ENCODE measurements at regions of chr9 and their contacts with region 1.

Region 1: DNA sequence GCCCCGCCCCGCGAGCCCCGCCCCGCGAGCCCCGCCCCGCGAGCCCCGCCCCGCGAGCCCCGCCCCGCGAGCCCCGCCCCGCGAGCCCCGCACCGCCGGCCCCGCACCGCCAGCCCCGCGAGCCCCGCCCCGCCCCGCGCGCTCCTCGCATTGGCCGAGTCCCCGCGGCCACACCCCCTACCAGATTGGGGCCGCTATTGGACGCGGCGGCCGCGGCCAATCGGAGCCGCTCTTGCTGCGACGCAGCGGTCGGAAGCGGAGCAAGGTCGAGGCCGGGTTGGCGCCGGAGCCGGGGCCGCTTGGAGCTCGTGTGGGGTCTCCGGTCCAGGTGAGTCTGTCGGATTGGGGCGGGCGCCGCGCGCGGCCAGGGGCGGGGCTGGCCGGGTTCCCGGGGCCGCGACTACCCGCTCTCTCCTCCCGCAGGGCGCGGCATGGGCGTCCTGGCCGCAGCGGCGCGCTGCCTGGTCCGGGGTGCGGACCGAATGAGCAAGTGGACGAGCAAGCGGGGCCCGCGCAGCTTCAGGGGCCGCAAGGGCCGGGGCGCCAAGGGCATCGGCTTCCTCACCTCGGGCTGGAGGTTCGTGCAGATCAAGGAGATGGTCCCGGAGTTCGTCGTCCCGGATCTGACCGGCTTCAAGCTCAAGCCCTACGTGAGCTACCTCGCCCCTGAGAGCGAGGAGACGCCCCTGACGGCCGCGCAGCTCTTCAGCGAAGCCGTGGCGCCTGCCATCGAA is at the start of gene MRPL41:
- DNase-seq: peak; percentile 70 to 93
- H3K4me3 ChIP-seq: peak within 1 kb of the TSS; percentile 63 to 79 (median 78)
- H3K27ac ChIP-seq: peak within 1 kb of the TSS; percentile 53; the same call in 1 of the 2 replicates
- H3K4me1 ChIP-seq: peaks cover 0 to 7% (median 1%) of the 10 kb centered on the region in 4 experiments; a peak in 3 of 7 replicates
- H3K27me3 ChIP-seq: no peaks in the 10 kb centered on the region
- CTCF ChIP-seq: no peak
- EP300 ChIP-seq: no peak
- POLR2A ChIP-seq: peak in 1 of 2 experiments; percentile 67; a peak in 2 of 3 replicates
- RAD21 ChIP-seq: no peak
- total RNA-seq, gene MRPL41: 47.2 and 49.4 TPM in 2 replicates

Region 2: DNA sequence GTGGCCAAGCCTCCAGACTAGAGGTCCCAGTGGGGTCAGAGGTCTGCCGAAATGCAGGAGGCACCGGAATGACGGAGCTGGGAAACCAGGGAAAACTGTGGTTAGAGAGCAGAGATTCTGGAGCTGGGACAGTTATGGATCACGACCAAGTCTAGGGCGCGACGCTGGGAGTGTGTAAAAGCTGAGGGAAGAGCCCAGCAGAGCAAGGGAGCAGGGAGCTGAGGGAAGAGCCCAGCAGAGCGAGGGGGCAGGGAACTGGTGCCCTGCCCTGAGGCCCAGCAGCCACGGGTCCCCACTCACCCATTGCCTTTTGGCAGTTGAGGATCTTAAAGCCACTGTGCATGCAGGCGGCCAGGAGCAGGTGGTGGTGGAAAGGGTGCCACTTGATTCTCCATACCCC is 12.3 kb after region 1 on chr9:
- CTCF ChIA-PET with region 1: no interaction called
- POLR2A ChIA-PET with region 1: interaction called, 11 read pairs
- DNase-seq: no peak
- H3K4me3 ChIP-seq: no peak overlapping the region
- H3K27ac ChIP-seq: no peak overlapping the region
- H3K4me1 ChIP-seq: no peaks in the 10 kb centered on the region
- H3K27me3 ChIP-seq: no peaks in the 10 kb centered on the region
- CTCF ChIP-seq: no peak
- EP300 ChIP-seq: no peak
- POLR2A ChIP-seq: no peak
- RAD21 ChIP-seq: no peak

Region 3: DNA sequence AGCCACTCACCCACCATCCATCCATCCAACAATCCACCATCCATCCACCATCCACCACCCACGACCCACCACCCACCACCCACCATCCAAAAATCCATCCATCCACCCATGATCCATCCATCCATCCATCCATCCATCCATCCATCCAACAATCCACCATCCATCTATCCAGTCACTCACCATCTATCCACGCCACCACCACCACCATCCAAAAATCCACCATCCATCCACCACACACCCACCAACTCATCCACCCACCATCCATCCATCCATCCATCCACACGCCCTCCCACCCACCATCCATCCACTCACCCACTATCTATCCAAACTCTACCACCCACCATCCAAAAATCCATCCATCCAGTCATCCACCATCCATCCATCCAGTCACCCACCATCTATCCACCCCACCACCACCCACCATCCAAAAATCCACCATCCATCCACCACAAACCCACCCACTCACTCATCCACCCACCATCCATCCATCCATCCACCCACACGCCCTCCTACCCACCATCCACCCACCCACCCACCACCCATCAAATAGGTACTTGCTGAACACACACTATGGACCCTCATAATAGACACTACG is 17.9 kb after region 1 on chr9:
- CTCF ChIA-PET with region 1: interaction called, 21 read pairs
- POLR2A ChIA-PET with region 1: interaction called, 14 read pairs
- DNase-seq: no peak
- H3K4me3 ChIP-seq: no peak overlapping the region
- H3K27ac ChIP-seq: no peak overlapping the region
- H3K4me1 ChIP-seq: no peaks in the 10 kb centered on the region
- H3K27me3 ChIP-seq: no peaks in the 10 kb centered on the region
- CTCF ChIP-seq: no peak
- EP300 ChIP-seq: no peak
- POLR2A ChIP-seq: no peak
- RAD21 ChIP-seq: no peak

Measured in H1 (cell line).